Activated CD4-positive, alpha-beta T cell treated with anti-CD3 and anti-CD28 coated beads, Interleukin-2, amount 10 ng/mL, durations not matched to agents 24 days and 14 days (primary cell): ENCODE measurements at regions of chr7 and their contacts with region 1.

Region 1: DNA sequence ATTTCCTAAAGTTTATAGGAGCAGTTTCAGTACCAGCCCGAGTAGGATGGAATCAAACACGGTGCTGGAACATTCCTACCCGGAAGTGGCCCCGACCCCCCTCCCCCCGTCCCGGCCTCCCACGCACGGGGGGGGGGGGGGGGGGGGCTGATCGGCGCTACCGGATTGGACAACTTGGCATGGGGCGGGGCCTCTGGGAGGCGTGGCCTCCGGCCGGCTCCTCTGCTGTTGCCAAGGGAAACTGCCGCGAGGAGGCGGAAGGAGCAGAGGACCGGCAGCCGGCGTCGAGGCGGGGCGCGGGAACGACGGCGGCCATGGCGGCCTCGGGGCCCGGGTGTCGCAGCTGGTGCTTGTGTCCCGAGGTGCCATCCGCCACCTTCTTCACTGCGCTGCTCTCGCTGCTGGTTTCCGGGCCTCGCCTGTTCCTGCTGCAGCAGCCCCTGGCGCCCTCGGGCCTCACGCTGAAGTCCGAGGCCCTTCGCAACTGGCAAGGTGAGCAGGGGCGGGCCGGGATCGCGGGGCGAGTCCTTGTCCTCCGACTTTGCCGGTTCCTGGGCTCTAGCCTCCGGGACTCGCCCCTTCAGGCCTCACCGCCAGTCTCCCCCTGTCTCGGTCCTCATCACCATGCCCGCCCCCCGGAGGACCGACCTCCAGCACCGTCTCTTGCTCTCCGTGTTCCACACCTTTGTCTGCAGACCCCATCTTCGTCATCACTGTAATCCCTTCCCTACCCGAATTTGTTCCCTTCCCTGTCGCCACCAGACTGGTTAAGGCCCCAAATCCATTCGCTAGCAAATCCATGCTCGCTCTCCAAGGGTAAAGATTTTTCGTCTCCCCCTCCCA is at the start of gene RHBDD2:
- DNase-seq: peak; percentile 98
- H3K4me3 Mint-ChIP-seq: peak within 1 kb of the TSS; percentile 100
- H3K27ac Mint-ChIP-seq: peak within 1 kb of the TSS; percentile 93
- H3K4me1 Mint-ChIP-seq: peaks cover 32% of the 10 kb centered on the region
- H3K27me3 Mint-ChIP-seq: no peaks in the 10 kb centered on the region
- total RNA-seq, gene RHBDD2: 48.4 and 49.2 TPM in 2 replicates

Region 2: GRCh38 chr7:75738987-75739795 is 139.8 kb before region 1 on chr7:
- intact Hi-C with region 1: loop called (anchors 1 kb)
- DNase-seq: peak; percentile 100
- H3K4me3 Mint-ChIP-seq: peak overlapping the region; percentile 90
- H3K27ac Mint-ChIP-seq: peak overlapping the region; percentile 97
- H3K4me1 Mint-ChIP-seq: peaks cover 16% of the 10 kb centered on the region
- H3K27me3 Mint-ChIP-seq: peaks cover 25% of the 10 kb centered on the region

Region 3: DNA sequence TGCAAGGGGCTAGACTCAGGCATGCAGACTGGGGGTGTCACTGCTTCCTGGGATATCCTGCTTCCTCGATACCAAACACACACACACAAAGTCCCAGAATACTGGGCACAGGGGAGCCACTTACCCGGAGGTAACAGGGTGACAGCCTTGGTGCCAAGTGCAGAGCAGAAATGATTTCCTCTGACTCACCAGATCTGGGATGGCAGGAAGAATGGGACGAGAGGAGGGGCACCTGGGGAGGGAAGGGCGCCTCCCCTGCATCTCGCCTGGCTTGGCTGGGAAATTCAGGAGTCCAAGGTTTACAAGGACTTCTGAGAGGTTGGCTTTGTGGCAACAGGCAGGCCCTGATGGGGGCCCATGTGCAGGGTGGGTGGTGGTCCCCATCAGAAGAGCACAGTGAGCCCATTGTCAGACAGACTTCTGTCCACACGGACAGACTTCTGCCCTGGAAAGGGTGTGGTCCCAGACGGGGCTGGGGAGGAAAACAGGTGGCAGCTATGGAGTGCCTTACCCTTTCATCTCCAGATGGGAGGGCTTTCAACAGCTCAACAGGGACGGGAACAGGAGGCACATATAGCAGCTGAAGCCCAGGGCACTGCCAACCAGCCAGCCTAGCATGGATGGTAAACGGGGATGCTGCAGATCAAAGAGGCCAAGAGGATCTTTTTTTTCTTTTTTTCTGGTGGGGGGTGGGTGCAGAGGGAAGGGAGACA is 55.6 kb before region 1 on chr7:
- intact Hi-C with region 1: no loop called
- DNase-seq: no peak
- H3K4me3 Mint-ChIP-seq: no peak overlapping the region
- H3K27ac Mint-ChIP-seq: no peak overlapping the region
- H3K4me1 Mint-ChIP-seq: no peaks in the 10 kb centered on the region
- H3K27me3 Mint-ChIP-seq: no peaks in the 10 kb centered on the region

Region 4: DNA sequence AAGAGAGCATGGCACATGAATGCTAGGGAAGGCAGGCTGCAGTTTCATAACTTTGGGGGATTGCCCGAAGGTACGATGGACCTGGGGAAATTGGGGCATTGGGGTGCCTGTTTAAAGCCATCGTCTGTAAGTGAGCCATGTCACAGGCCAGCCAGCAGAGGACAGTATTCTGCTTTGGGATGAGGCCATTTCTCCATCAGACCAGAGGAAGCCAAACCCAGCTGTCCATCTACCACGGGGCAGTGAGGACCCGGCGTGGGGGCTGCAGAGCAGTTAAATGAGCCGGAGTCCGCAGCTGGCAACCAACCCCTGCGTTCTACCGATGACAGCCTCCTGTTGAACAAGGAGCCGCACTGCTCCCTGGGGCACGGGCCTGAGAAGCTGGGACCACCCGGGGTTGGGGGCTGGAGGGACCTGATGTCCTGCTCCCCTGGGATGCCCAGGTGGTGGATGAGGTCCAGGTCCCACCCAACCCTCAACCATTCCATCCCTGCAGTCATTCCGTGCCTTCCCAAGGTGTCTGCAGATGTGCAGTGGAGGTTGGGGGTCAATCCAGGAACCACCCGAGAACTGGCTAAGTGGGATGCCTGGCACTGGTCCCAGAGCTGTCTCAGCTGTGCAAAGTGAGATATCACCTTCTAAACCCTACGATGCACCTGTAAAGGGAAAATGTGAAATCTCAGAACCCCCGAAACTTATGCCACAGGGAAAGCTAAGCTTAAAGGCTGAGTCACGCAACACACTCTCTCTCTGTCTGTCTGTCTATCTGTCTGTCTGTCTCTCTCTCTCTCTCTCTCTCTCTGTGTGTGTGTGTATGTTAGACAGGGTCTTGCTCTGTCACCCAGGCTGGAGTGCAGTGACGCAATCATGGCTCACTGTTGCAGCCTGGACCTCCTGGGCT is 12.3 kb before region 1 on chr7:
- intact Hi-C with region 1: loop called (anchors 1 kb)
- DNase-seq: peak; percentile 83
- H3K4me3 Mint-ChIP-seq: no peak overlapping the region
- H3K27ac Mint-ChIP-seq: no peak overlapping the region
- H3K4me1 Mint-ChIP-seq: peaks cover 23% of the 10 kb centered on the region
- H3K27me3 Mint-ChIP-seq: peaks cover 13% of the 10 kb centered on the region

Region 5: GRCh38 chr7:75914730-75915585 is 36.0 kb after region 1 on chr7 and contains the start of gene POR:
- intact Hi-C with region 1: loop called (anchors 1 kb)
- DNase-seq: peak; percentile 100
- H3K4me3 Mint-ChIP-seq: peak within 1 kb of the TSS; percentile 91
- H3K27ac Mint-ChIP-seq: peak within 1 kb of the TSS; percentile 90
- H3K4me1 Mint-ChIP-seq: peaks cover 22% of the 10 kb centered on the region
- H3K27me3 Mint-ChIP-seq: no peaks in the 10 kb centered on the region
- total RNA-seq, gene POR: 69.4 and 75.0 TPM in 2 replicates

Region 6: DNA sequence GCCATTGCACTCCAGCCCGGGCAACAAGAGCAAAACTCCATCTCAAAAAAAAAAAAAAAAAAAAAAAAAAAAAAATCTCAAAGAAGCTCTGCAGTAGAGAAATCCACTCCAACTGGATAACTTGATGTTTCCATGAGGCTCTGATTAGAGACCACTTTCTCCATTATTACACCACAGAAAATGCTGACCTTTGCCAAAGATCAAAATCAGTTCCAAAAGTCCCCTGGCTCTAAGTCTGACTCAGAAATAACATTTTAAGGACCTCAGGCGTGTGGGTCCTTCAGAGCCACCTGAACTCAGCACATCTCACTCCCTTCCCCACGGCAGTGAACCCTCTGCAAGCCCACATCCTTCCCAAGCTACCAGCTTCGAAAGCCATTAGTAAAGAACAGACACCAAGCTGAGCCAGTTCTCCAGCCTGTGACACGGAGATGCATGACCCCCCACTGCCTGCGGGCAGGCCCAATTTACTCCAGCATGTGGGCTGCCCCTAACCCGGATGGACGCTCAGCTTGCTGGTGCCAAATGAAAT is 129.2 kb after region 1 on chr7:
- intact Hi-C with region 1: loop called (anchors 1 kb)
- DNase-seq: peak; percentile 76
- H3K4me3 Mint-ChIP-seq: peak overlapping the region; percentile 62
- H3K27ac Mint-ChIP-seq: peak overlapping the region; percentile 87
- H3K4me1 Mint-ChIP-seq: peaks cover 40% of the 10 kb centered on the region
- H3K27me3 Mint-ChIP-seq: no peaks in the 10 kb centered on the region